ENCODE measurements at regions of chr3 and their contacts with region 1.

Region 1: DNA sequence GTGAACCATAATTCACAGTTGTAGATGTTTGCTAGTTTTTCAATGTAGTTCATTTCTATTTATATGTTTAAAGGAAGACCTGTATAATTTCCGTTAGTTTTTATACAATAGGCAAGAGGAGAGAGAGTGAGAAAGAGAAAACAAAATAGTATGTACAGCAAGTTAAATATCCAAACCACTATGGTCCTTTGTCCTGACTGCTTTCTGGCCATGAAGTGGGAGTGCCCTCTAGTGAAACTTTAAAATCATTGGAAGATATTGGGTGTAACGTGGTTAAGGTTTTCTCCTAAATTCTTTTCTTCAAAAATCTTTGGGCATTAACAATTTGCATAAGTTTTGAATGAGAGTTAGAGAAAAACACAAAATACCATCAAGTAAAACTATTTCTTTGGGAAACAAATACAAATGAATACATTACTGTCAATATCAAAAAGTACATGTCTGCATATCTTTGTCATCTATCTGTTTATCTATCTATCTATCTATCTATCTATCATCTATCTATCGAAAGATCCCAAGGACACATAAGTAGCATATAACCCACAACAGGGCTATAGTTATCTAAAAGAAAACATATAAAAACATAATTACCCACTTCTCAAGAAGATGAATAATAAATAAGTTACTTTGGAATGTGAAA is 534.6 kb upstream of the ATP11B start:
- DNase-seq: no peak
- H3K4me3 ChIP-seq: no peak overlapping the region
- H3K27ac ChIP-seq: no peak overlapping the region
- H3K4me1 ChIP-seq: no peaks in the 10 kb centered on the region
- H3K27me3 ChIP-seq: peaks cover 0 to 14% (median 0%) of the 10 kb centered on the region in 3 donors
- CTCF ChIP-seq: peak in 2 of 4 experiments; percentile 11 to 32
- EP300 ChIP-seq: no peak
- POLR2A ChIP-seq: no peak

Region 2: DNA sequence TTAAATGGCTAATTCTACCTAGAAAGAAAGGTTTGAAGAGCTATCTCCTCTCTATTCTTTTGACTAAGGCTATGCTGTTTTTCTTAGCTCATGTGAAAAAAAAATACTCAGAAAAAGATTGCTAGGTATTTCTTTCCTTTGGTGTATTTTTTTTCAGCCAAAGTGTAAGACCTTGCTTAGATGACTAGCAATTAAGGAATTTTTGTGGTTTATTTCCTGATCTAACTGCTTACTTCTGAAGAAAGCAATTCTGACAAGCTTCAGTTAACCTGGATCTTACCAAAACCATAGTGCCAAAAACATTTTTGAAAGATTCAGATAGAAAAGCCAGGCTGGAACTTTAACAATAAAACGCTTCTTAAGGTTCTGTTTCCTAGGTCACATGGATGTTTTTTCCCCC is 231.3 kb before region 1 on chr3:
- intact Hi-C with region 1: no loop called
- DNase-seq: no peak
- H3K4me3 ChIP-seq: no peak overlapping the region
- H3K27ac ChIP-seq: no peak overlapping the region
- H3K4me1 ChIP-seq: no peaks in the 10 kb centered on the region
- H3K27me3 ChIP-seq: no peaks in the 10 kb centered on the region
- CTCF ChIP-seq: no peak
- EP300 ChIP-seq: no peak
- POLR2A ChIP-seq: no peak

Region 3: GRCh38 chr3:182092662-182093262 is 165.9 kb before region 1 on chr3:
- intact Hi-C with region 1: loop called (anchors 10 kb)
- DNase-seq: no peak
- H3K4me3 ChIP-seq: no peak overlapping the region
- H3K27ac ChIP-seq: no peak overlapping the region
- H3K4me1 ChIP-seq: no peaks in the 10 kb centered on the region
- H3K27me3 ChIP-seq: no peaks in the 10 kb centered on the region
- CTCF ChIP-seq: no peak
- EP300 ChIP-seq: no peak
- POLR2A ChIP-seq: no peak

Measured in sigmoid colon (tissue), 7 donors.